ENCODE measurements at regions of chr10 and their contacts with region 1.

Region 1: DNA sequence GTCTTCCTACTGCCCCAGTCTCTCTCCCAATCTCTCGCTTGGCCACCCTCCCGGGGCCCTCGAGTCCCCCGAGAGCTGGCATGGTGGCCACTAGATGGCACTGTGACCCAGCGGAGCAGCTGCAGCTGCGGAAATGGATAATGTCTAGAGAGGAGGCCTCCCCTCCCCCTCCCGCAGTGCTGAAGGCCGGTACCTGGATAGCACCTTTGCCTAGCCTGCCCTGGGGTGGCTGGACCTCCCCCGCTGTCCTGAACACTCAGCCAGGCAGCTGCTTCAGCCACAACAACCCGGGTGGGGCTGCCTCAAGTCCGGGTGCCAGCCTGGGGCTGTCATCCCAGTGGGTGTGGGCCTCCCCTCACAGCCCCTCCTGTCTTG is 65.2 kb downstream of the GOLGA7B start:
- DNase-seq: peak; percentile 35 to 63
- H3K4me3 ChIP-seq: no peak overlapping the region
- H3K27ac ChIP-seq: no peak overlapping the region
- H3K4me1 ChIP-seq: no peaks in the 10 kb centered on the region
- H3K27me3 ChIP-seq: peaks cover 10% of the 10 kb centered on the region
- CTCF ChIP-seq: peak; percentile 85

Region 2: GRCh38 chr10:96765406-96766240 is 1149.2 kb before region 1 on chr10:
- CTCF ChIA-PET with region 1: no interaction called
- POLR2A ChIA-PET with region 1: no interaction called
- intact Hi-C with region 1: no loop called
- DNase-seq: peak in 1 of 2 experiments; percentile 49
- H3K4me3 ChIP-seq: no peak overlapping the region
- H3K27ac ChIP-seq: no peak overlapping the region
- H3K4me1 ChIP-seq: no peaks in the 10 kb centered on the region
- H3K27me3 ChIP-seq: no peaks in the 10 kb centered on the region
- CTCF ChIP-seq: peak; percentile 80

Region 3: GRCh38 chr10:98467506-98468346 is 552.9 kb after region 1 on chr10:
- CTCF ChIA-PET with region 1: no interaction called
- POLR2A ChIA-PET with region 1: no interaction called
- intact Hi-C with region 1: loop called (anchors 10 kb)
- DNase-seq: peak; percentile 52 to 64
- H3K4me3 ChIP-seq: peak overlapping the region; percentile 71
- H3K27ac ChIP-seq: no peak overlapping the region
- H3K4me1 ChIP-seq: no peaks in the 10 kb centered on the region
- H3K27me3 ChIP-seq: no peaks in the 10 kb centered on the region
- CTCF ChIP-seq: peak; percentile 68